ENCODE measurements at regions of chr1 and their contacts with region 1.

Region 1: GRCh38 chr1:94541175-94542087 is at the start of gene F3:
- DNase-seq: no peak
- H3K4me3 ChIP-seq: peak within 1 kb of the TSS; percentile 79
- H3K27ac ChIP-seq: peak within 1 kb of the TSS; percentile 95
- H3K27me3 ChIP-seq: no peaks in the 10 kb centered on the region
- CTCF ChIP-seq: peak; percentile 25; the same call in 1 of the 2 replicates
- polyA plus RNA-seq, gene F3: 319 and 330 TPM in 2 replicates

Region 2: GRCh38 chr1:94504601-94505000 is 36.8 kb before region 1 on chr1:
- CTCF ChIA-PET with region 1: no interaction called
- POLR2A ChIA-PET with region 1: no interaction called
- DNase-seq: no peak
- H3K4me3 ChIP-seq: no peak overlapping the region
- H3K27ac ChIP-seq: no peak overlapping the region
- H3K27me3 ChIP-seq: no peaks in the 10 kb centered on the region
- CTCF ChIP-seq: no peak

Region 3: GRCh38 chr1:94560333-94560732 is 18.9 kb after region 1 on chr1:
- CTCF ChIA-PET with region 1: interaction called, 3 read pairs
- POLR2A ChIA-PET with region 1: interaction called, 13 read pairs
- DNase-seq: no peak
- H3K4me3 ChIP-seq: no peak overlapping the region
- H3K27ac ChIP-seq: peak overlapping the region; percentile 70
- H3K27me3 ChIP-seq: no peaks in the 10 kb centered on the region
- CTCF ChIP-seq: peak; percentile 42

Region 4: DNA sequence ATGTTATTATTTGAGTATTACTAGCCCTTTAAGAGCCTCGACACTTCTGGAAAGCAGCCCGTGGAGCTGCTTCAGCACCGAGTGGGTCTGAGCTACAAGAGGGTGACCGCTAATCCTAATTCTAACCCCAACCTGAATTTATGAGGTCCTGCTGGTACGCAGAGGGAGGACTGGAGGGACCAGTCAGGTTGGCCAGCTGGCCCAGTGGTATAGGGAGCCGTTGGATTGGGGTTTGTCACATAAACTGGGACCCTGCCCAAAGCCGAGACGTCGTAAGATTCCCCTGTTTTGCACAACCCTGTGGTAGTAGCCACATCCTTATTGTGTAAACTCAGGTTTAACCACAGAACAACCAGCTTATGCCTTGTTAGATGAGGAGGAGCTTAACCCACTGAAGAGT is 60.9 kb after region 1 on chr1:
- CTCF ChIA-PET with region 1: no interaction called
- POLR2A ChIA-PET with region 1: interaction called, 15 read pairs
- DNase-seq: no peak
- H3K4me3 ChIP-seq: no peak overlapping the region
- H3K27ac ChIP-seq: no peak overlapping the region
- H3K27me3 ChIP-seq: no peaks in the 10 kb centered on the region
- CTCF ChIP-seq: no peak

Region 5: GRCh38 chr1:94608142-94608851 is 66.9 kb after region 1 on chr1:
- CTCF ChIA-PET with region 1: no interaction called
- POLR2A ChIA-PET with region 1: interaction called, 10 read pairs
- DNase-seq: no peak
- H3K4me3 ChIP-seq: no peak overlapping the region
- H3K27ac ChIP-seq: no peak overlapping the region
- H3K27me3 ChIP-seq: no peaks in the 10 kb centered on the region
- CTCF ChIP-seq: no peak

Region 6: DNA sequence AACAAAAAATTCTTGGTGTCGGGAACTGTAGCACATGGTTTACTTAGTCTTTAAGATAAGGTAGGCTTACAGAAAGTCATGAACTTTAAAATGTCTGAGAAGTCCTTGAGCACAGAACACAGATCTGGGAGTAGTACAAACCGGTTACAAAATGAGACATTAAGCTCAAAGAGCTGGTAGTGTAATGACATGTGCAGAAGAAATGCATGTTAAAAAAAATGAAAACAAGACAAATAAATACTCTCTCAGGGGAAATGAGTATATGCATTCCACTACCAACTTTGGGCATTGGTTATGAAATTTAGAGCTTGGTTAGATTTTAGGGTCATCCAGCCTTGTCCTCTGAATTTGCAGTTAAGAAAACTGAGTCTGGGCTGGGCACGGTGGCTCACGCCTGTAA is 91.6 kb after region 1 on chr1:
- CTCF ChIA-PET with region 1: interaction called, 3 read pairs
- POLR2A ChIA-PET with region 1: interaction called, 18 read pairs
- DNase-seq: no peak
- H3K4me3 ChIP-seq: no peak overlapping the region
- H3K27ac ChIP-seq: peak overlapping the region; percentile 83
- H3K27me3 ChIP-seq: no peaks in the 10 kb centered on the region
- CTCF ChIP-seq: no peak

Region 7: GRCh38 chr1:94648225-94649007 is 107.0 kb after region 1 on chr1:
- CTCF ChIA-PET with region 1: no interaction called
- POLR2A ChIA-PET with region 1: interaction called, 12 read pairs
- DNase-seq: peak; percentile 99
- H3K4me3 ChIP-seq: no peak overlapping the region
- H3K27ac ChIP-seq: peak overlapping the region; percentile 97
- H3K27me3 ChIP-seq: no peaks in the 10 kb centered on the region
- CTCF ChIP-seq: no peak

Region 8: GRCh38 chr1:94727846-94728715 is 186.7 kb after region 1 on chr1:
- CTCF ChIA-PET with region 1: no interaction called
- POLR2A ChIA-PET with region 1: interaction called, 21 read pairs
- DNase-seq: peak; percentile 93
- H3K4me3 ChIP-seq: no peak overlapping the region
- H3K27ac ChIP-seq: peak overlapping the region; percentile 77
- H3K27me3 ChIP-seq: no peaks in the 10 kb centered on the region
- CTCF ChIP-seq: no peak